ENCODE measurements at regions of chr22 and their contacts with region 1.

Region 1: GRCh38 chr22:17171313-17172171 is 12.5 kb upstream of the HDHD5 start:
- DNase-seq: peak; percentile 96
- H3K4me3 ChIP-seq: peak overlapping the region; percentile 59 to 99
- H3K27ac ChIP-seq: peak overlapping the region; percentile 72 to 82
- H3K4me1 ChIP-seq: peaks cover 0 to 3% of the 10 kb centered on the region in 2 experiments; a peak in 1 of 4 replicates
- H3K27me3 ChIP-seq: no peaks in the 10 kb centered on the region
- CTCF ChIP-seq: peak; percentile 90
- EP300 ChIP-seq: no peak
- RAD21 ChIP-seq: peak; percentile 55

Region 2: DNA sequence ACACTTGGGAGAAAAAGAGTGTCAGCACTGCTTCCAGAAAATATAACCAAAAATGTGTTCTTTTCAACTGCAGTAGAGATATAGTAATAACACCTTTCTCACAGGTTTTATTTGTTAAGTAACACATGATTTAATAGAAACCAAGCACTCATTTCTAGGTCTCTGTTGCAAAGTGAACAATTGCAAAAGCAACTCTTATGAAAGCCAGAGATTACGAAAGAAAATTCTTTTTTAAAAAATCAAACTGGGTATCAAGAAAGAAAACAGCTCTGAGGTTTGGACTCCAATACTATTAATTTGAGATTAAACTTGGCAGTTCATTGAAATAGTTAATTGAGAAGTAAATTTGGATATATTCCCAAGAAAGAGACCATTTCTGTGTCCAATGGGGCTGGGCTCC is 336.6 kb before region 1 on chr22:
- CTCF ChIA-PET with region 1: no interaction called
- POLR2A ChIA-PET with region 1: no interaction called
- DNase-seq: no peak
- H3K4me3 ChIP-seq: no peak overlapping the region
- H3K27ac ChIP-seq: no peak overlapping the region
- H3K4me1 ChIP-seq: no peaks in the 10 kb centered on the region; a peak in 1 of 4 replicates
- H3K27me3 ChIP-seq: no peaks in the 10 kb centered on the region; the same call in none of the 2 replicates
- CTCF ChIP-seq: no peak
- EP300 ChIP-seq: no peak
- RAD21 ChIP-seq: no peak

Region 3: DNA sequence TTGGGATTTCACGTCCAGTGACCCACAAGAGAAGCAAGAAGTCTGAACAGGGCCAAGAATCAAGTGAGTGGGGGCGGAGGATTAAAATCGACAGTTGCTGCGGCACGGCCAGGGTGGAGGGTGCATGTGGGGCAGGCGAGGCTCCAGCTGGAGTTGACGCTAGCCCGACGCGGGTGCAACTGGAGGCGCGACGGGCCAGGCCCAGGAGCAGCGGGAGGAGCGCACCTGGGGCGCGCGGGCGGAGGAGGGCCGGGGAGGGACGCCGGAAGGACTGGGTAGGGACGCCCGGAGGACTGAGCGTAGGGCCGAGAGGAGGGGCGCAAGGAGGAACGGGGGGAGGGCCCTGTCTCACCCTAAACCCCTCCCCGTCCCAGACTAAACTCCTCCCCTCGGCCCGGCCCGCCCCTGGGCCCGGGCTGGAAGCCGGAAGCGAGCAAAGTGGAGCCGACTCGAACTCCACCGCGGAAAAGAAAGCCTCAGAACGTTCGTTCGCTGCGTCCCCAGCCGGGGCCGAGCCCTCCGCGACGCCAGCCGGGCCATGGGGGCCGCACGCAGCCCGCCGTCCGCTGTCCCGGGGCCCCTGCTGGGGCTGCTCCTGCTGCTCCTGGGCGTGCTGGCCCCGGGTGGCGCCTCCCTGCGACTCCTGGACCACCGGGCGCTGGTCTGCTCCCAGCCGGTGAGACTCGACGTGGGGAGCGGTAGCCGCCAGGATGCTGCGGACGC is 86.8 kb before region 1 on chr22 and contains the start of gene IL17RA:
- CTCF ChIA-PET with region 1: interaction called, 17 read pairs
- POLR2A ChIA-PET with region 1: no interaction called
- DNase-seq: peak; percentile 77
- H3K4me3 ChIP-seq: peak within 1 kb of the TSS; percentile 58 to 74
- H3K27ac ChIP-seq: no peak within 1 kb of the TSS; a peak in 1 of 4 replicates
- H3K4me1 ChIP-seq: no peaks in the 10 kb centered on the region
- H3K27me3 ChIP-seq: peaks cover 4% of the 10 kb centered on the region; the same call in 1 of the 2 replicates
- CTCF ChIP-seq: no peak
- EP300 ChIP-seq: no peak
- RAD21 ChIP-seq: no peak
- polyA plus RNA-seq, gene IL17RA: 4.2 and 4.5 TPM in 2 replicates

Region 4: GRCh38 chr22:17121227-17122195 is 50.0 kb before region 1 on chr22 and contains the start of gene TMEM121B:
- CTCF ChIA-PET with region 1: interaction called, 18 read pairs
- POLR2A ChIA-PET with region 1: interaction called, 6 read pairs
- DNase-seq: peak; percentile 95
- H3K4me3 ChIP-seq: peak within 1 kb of the TSS; percentile 49 to 57
- H3K27ac ChIP-seq: peak within 1 kb of the TSS in 1 of 2 experiments; percentile 50; a peak in 1 of 4 replicates
- H3K4me1 ChIP-seq: peaks cover 0 to 5% of the 10 kb centered on the region in 2 experiments; a peak in 1 of 4 replicates
- H3K27me3 ChIP-seq: peaks cover 9% of the 10 kb centered on the region; the same call in 1 of the 2 replicates
- CTCF ChIP-seq: no peak
- EP300 ChIP-seq: no peak
- RAD21 ChIP-seq: no peak
- polyA plus RNA-seq, gene TMEM121B: 0.08 and 0.13 TPM in 2 replicates

Region 5: GRCh38 chr22:17158568-17159503 is 12.7 kb before region 1 on chr22 and contains the start of gene HDHD5:
- CTCF ChIA-PET with region 1: interaction called, 96 read pairs
- POLR2A ChIA-PET with region 1: interaction called, 11 read pairs
- DNase-seq: peak; percentile 96
- H3K4me3 ChIP-seq: peak within 1 kb of the TSS; percentile 62 to 90
- H3K27ac ChIP-seq: peak within 1 kb of the TSS; percentile 80 to 82
- H3K4me1 ChIP-seq: peaks cover 0 to 9% of the 10 kb centered on the region in 2 experiments; a peak in 1 of 4 replicates
- H3K27me3 ChIP-seq: no peaks in the 10 kb centered on the region
- CTCF ChIP-seq: no peak
- EP300 ChIP-seq: no peak
- RAD21 ChIP-seq: no peak
- polyA plus RNA-seq, gene HDHD5: 43.3 and 45.4 TPM in 2 replicates

Region 6: GRCh38 chr22:17228725-17229126 is 57.2 kb after region 1 on chr22:
- CTCF ChIA-PET with region 1: interaction called, 10 read pairs
- POLR2A ChIA-PET with region 1: no interaction called
- DNase-seq: no peak
- H3K4me3 ChIP-seq: no peak overlapping the region
- H3K27ac ChIP-seq: no peak overlapping the region
- H3K4me1 ChIP-seq: no peaks in the 10 kb centered on the region
- H3K27me3 ChIP-seq: peaks cover 13% of the 10 kb centered on the region
- CTCF ChIP-seq: no peak
- EP300 ChIP-seq: no peak
- RAD21 ChIP-seq: no peak

Measured in SK-N-SH (cell line).